Posterior cingulate gyrus (tissue), 11 donors: ENCODE measurements at regions of chr10 and their contacts with region 1.

Region 1: GRCh38 chr10:77641788-77642397 is 4.3 kb upstream of the KCNMA1 start:
- DNase-seq: peak in 4 of 10 donors; percentile 51 to 63 (median 60)

Region 2: DNA sequence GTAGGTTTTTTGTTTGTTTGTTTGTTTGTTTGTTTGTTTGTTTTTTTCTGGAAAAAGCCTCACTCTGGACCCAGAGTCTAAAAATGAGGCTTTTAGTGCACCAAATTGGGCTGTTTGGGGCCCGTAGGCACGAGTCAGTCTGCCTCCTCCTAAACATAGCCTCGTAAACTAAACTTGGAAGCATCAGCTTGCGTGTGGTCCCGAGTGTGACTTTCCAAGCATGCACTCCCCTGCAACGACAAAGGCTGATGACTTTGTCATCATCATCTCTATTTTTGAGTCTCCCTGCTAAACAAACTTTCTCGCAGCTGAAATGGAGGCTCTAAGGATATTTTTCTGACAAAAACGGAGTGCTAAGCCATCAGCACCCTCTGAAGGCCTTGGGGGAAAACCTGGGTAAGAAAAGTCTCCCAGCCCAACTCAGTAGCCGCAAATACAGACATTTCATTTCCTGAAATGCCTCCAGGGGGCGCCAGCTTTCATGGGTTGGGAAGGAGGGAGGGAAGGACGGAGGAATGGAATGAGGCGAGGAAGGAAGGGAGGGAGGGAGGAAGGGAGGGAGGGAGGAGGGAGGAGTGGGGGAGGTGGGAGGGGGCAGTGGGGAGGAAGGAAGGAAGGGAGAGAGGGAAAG is 250.2 kb before region 1 on chr10:
- intact Hi-C with region 1: loop called (anchors 2 kb)
- DNase-seq: peak in 9 of 10 donors; percentile 59 to 95 (median 86)

Region 3: DNA sequence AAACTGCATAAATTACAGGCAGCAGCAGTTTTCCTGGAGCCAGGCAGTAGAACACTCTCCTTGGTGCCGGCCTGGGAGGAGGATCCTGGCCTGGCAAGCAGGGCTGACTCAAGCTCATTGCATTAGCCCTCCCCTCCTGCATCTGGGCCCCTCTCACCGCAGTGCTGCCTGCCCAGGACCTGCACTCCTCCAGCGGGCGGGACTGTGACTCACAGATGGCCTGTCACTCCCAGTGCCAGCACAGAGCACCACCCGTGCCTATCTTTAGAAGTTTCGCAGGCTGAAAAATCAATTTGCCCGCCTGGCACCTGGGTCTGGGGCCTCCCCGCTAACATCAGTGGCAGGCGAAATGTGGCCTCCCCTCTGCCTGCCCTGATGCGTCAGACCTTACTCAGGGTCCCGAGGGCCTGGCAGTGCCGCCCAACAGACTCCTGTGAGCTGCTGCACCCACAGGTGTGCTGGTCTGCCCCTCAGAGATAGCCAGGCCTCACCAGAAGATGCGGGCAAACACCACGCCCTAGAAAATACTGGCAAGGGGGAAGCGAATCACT is 128.0 kb before region 1 on chr10:
- intact Hi-C with region 1: loop called (anchors 5 kb)
- DNase-seq: peak in 9 of 10 donors; percentile 39 to 96 (median 72)